ENCODE measurements at regions of chr2 and their contacts with region 1.

Region 1: GRCh38 chr2:26244309-26245121 is at the starts of genes HADHA and HADHB:
- DNase-seq: peak; percentile 82 to 91
- H3K4me3 ChIP-seq: peak within 1 kb of the TSS; percentile 95
- H3K27ac ChIP-seq: peak within 1 kb of the TSS; percentile 75
- H3K4me1 ChIP-seq: peaks cover 41% of the 10 kb centered on the region
- H3K27me3 ChIP-seq: no peaks in the 10 kb centered on the region
- CTCF ChIP-seq: no peak; the same call in 1 of the 2 replicates
- total RNA-seq, gene HADHA: 99.9 and 129 TPM in 2 replicates
- total RNA-seq, gene HADHB: 72.7 and 73.1 TPM in 2 replicates

Region 2: GRCh38 chr2:26284136-26284535 is 39.6 kb after region 1 on chr2:
- CTCF ChIA-PET with region 1: no interaction called
- POLR2A ChIA-PET with region 1: interaction called, 16 read pairs
- intact Hi-C with region 1: no loop called
- DNase-seq: peak in 1 of 2 experiments; percentile 43
- H3K4me3 ChIP-seq: no peak overlapping the region
- H3K27ac ChIP-seq: no peak overlapping the region
- H3K4me1 ChIP-seq: no peaks in the 10 kb centered on the region
- H3K27me3 ChIP-seq: no peaks in the 10 kb centered on the region
- CTCF ChIP-seq: no peak

Region 3: GRCh38 chr2:26299471-26300101 is 55.1 kb after region 1 on chr2:
- CTCF ChIA-PET with region 1: no interaction called
- POLR2A ChIA-PET with region 1: interaction called, 3 read pairs
- intact Hi-C with region 1: loop called (anchors 5 kb)
- DNase-seq: peak; percentile 55 to 82
- H3K4me3 ChIP-seq: peak overlapping the region; percentile 56
- H3K27ac ChIP-seq: peak overlapping the region; percentile 10
- H3K4me1 ChIP-seq: peaks cover 27% of the 10 kb centered on the region
- H3K27me3 ChIP-seq: no peaks in the 10 kb centered on the region
- CTCF ChIP-seq: no peak

Region 4: DNA sequence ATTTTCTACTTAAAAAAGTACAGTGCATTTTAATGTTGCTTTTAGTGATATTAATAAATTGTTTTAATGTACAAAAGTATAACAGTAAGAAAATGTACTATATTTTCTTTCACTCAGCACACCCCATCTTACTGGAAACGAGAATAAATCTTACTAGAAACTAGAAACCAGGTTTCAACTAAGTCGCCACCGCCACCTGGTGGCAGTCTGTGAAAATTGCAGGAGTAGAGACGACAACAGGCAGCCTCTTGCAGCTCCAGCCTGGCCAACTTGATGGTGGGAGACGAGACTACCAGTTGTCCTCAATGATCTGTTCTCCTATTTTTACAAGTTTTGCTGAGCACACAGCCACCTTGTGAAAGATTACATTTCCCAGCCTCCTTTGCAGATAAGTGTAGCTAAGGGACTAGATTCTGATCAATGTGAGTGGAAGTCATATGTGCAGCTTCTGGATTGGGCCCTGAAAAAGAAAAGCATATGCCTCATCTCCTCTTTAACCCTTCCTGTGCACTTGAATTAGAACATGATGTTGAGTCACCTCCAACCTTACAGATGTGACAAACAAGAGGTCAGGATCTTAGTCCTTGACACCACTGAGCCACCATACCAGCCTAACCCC is 224.7 kb after region 1 on chr2:
- CTCF ChIA-PET with region 1: no interaction called
- POLR2A ChIA-PET with region 1: no interaction called
- intact Hi-C with region 1: loop called (anchors 5 kb)
- DNase-seq: peak in 1 of 2 experiments; percentile 53
- H3K4me3 ChIP-seq: no peak overlapping the region
- H3K27ac ChIP-seq: no peak overlapping the region
- H3K4me1 ChIP-seq: 0 out of 2 replicates have a peak, but pooled peaks cover 5% of the 10 kb centered on the region
- H3K27me3 ChIP-seq: no peaks in the 10 kb centered on the region
- CTCF ChIP-seq: peak; percentile 97

Region 5: GRCh38 chr2:26503231-26503880 is 258.8 kb after region 1 on chr2:
- CTCF ChIA-PET with region 1: no interaction called
- POLR2A ChIA-PET with region 1: no interaction called
- intact Hi-C with region 1: no loop called
- DNase-seq: peak; percentile 59 to 81
- H3K4me3 ChIP-seq: peak overlapping the region; percentile 50; the same call in 1 of the 2 replicates
- H3K27ac ChIP-seq: no peak overlapping the region
- H3K4me1 ChIP-seq: 0 out of 2 replicates have a peak, but pooled peaks cover 6% of the 10 kb centered on the region
- H3K27me3 ChIP-seq: peaks cover 61% of the 10 kb centered on the region
- CTCF ChIP-seq: peak; percentile 85